Activated T-helper 1 cell treated with anti-CD3 and anti-CD28 coated beads, Interleukin-12 subunit alpha, Interleukin-12 subunit beta, Interleukin-2, Interleukin-4 antibody, amounts not matched to agents 30 ng/mL and 10 ng/mL and 1 ng/mL, durations not matched to agents 14 hours and 24 hours and 36 hours (primary cell): ENCODE measurements at regions of chr2 and their contacts with region 1.

Region 1: GRCh38 chr2:36329746-36330472 is 25.7 kb upstream of the CRIM1 start:
- DNase-seq: no peak
- H3K4me3 Mint-ChIP-seq: no peak overlapping the region
- H3K27ac Mint-ChIP-seq: no peak overlapping the region
- H3K4me1 Mint-ChIP-seq: no peaks in the 10 kb centered on the region
- H3K27me3 Mint-ChIP-seq: peaks cover 16% of the 10 kb centered on the region

Region 2: GRCh38 chr2:36128359-36128758 is 201.6 kb before region 1 on chr2:
- intact Hi-C with region 1: no loop called
- DNase-seq: no peak
- H3K4me3 Mint-ChIP-seq: no peak overlapping the region
- H3K27ac Mint-ChIP-seq: no peak overlapping the region
- H3K4me1 Mint-ChIP-seq: peaks cover 11% of the 10 kb centered on the region
- H3K27me3 Mint-ChIP-seq: peaks cover 20% of the 10 kb centered on the region

Region 3: GRCh38 chr2:36253086-36253485 is 76.8 kb before region 1 on chr2:
- intact Hi-C with region 1: loop called (anchors 5 kb)
- DNase-seq: no peak
- H3K4me3 Mint-ChIP-seq: no peak overlapping the region
- H3K27ac Mint-ChIP-seq: no peak overlapping the region
- H3K4me1 Mint-ChIP-seq: peaks cover 8% of the 10 kb centered on the region
- H3K27me3 Mint-ChIP-seq: peaks cover 23% of the 10 kb centered on the region